Psoas muscle (tissue), 8 donors: ENCODE measurements at regions of chrX and their contacts with region 1.

Region 1: GRCh38 chrX:117996918-117997480 is 119.6 kb downstream of the KLHL13 start:
- DNase-seq: no peak
- ATAC-seq: no peak
- H3K4me3 ChIP-seq: no peak overlapping the region
- H3K27ac ChIP-seq: no peak overlapping the region
- H3K4me1 ChIP-seq: no peaks in the 10 kb centered on the region
- H3K27me3 ChIP-seq: no peaks in the 10 kb centered on the region
- CTCF ChIP-seq: peak; percentile 18

Region 2: GRCh38 chrX:118226090-118226428 is 229.1 kb after region 1 on chrX:
- intact Hi-C with region 1: loop called in 1 of 2 experiments (anchors 10 kb)
- DNase-seq: no peak
- ATAC-seq: no peak
- H3K4me3 ChIP-seq: no peak overlapping the region
- H3K27ac ChIP-seq: no peak overlapping the region
- H3K4me1 ChIP-seq: no peaks in the 10 kb centered on the region
- H3K27me3 ChIP-seq: no peaks in the 10 kb centered on the region
- CTCF ChIP-seq: peak; percentile 54